PC-3 (cell line): ENCODE measurements at regions of chr13 and their contacts with region 1.

Region 1: GRCh38 chr13:23466144-23467002 is 32.9 kb upstream of the SACS start:
- DNase-seq: peak; percentile 77
- ATAC-seq: peak; percentile 74
- H3K4me3 ChIP-seq: peak overlapping the region; percentile 64
- H3K27ac ChIP-seq: peak overlapping the region; percentile 53
- H3K4me1 ChIP-seq: peaks cover 25% of the 10 kb centered on the region
- H3K27me3 ChIP-seq: no peaks in the 10 kb centered on the region
- CTCF ChIP-seq: peak; percentile 56

Region 2: DNA sequence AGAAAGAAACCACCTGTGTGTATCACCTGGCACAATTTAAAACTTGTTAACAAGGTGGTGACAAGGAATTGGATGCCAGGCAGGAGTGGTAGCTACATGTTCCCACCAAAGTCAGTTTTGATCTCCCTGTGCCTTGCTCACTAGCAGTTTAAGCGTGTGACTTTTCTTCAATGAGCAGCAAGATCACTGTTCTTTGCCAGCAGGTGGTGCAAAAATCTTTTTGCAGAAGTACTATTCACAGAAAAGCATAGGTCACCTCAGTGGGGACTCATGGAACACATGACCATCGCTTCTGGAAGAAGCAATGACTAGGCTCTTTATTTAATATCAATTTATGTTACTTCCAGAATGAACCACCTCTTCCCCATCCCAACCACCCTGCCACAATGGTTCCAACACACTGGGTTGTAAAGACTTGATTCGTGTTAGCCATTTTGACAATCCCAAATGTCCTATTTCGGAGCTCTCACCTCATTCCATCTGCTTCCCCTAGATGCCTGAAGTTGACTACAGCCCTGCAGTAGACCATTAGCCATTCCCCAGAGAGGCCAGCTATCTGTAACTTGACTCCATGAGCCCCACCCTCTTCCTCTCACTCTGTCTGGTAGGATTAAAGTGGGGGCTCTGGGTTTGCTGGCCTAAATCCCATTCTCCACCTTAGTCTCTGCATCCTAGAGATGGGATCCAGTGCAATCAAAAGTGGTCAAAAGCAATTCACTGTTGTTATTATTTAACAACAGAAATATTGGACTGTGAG is 44.8 kb after region 1 on chr13:
- CTCF ChIA-PET with region 1: no interaction called
- POLR2A ChIA-PET with region 1: no interaction called
- intact Hi-C with region 1: loop called (anchors 2 kb)
- DNase-seq: peak; percentile 50
- ATAC-seq: peak; percentile 37
- H3K4me3 ChIP-seq: no peak overlapping the region
- H3K27ac ChIP-seq: peak overlapping the region; percentile 83
- H3K4me1 ChIP-seq: peaks cover 32% of the 10 kb centered on the region
- H3K27me3 ChIP-seq: no peaks in the 10 kb centered on the region
- CTCF ChIP-seq: peak; percentile 56

Region 3: DNA sequence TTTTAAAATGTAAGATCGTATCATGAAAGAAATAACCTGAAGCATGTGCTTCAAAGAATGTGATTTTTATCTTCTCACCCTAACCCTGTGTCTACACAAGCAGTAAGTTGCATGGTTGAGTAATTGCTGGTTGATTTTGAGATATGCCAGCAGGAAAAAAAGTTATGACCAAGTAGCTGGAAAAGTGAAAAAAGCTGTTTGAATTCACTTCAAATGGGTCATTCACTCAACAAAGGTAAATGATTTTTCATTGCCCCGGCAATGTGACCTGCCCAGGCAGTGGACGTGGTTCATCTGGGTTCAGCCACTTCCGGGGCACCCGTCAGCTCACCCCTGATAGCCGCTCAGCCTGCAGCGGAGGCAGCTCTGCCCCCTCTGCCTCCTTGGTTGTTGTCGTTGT is 122.3 kb after region 1 on chr13:
- CTCF ChIA-PET with region 1: no interaction called
- POLR2A ChIA-PET with region 1: no interaction called
- intact Hi-C with region 1: no loop called
- DNase-seq: no peak
- ATAC-seq: no peak
- H3K4me3 ChIP-seq: no peak overlapping the region
- H3K27ac ChIP-seq: no peak overlapping the region
- H3K4me1 ChIP-seq: no peaks in the 10 kb centered on the region
- H3K27me3 ChIP-seq: no peaks in the 10 kb centered on the region
- CTCF ChIP-seq: no peak

Region 4: GRCh38 chr13:23673354-23673753 is 207.0 kb after region 1 on chr13:
- CTCF ChIA-PET with region 1: no interaction called
- POLR2A ChIA-PET with region 1: no interaction called
- intact Hi-C with region 1: loop called (anchors 10 kb)
- DNase-seq: peak; percentile 82
- ATAC-seq: peak; percentile 60
- H3K4me3 ChIP-seq: no peak overlapping the region
- H3K27ac ChIP-seq: peak overlapping the region; percentile 85
- H3K4me1 ChIP-seq: peaks cover 49% of the 10 kb centered on the region
- H3K27me3 ChIP-seq: no peaks in the 10 kb centered on the region
- CTCF ChIP-seq: no peak

Region 5: GRCh38 chr13:23715762-23716235 is 249.4 kb after region 1 on chr13:
- CTCF ChIA-PET with region 1: interaction called, 4 read pairs
- POLR2A ChIA-PET with region 1: no interaction called
- intact Hi-C with region 1: loop called (anchors 2 kb)
- DNase-seq: peak; percentile 78
- ATAC-seq: peak; percentile 80
- H3K4me3 ChIP-seq: peak overlapping the region; percentile 60
- H3K27ac ChIP-seq: peak overlapping the region; percentile 30; the same call in 1 of the 2 replicates
- H3K4me1 ChIP-seq: peaks cover 23% of the 10 kb centered on the region
- H3K27me3 ChIP-seq: no peaks in the 10 kb centered on the region
- CTCF ChIP-seq: peak; percentile 77

Region 6: DNA sequence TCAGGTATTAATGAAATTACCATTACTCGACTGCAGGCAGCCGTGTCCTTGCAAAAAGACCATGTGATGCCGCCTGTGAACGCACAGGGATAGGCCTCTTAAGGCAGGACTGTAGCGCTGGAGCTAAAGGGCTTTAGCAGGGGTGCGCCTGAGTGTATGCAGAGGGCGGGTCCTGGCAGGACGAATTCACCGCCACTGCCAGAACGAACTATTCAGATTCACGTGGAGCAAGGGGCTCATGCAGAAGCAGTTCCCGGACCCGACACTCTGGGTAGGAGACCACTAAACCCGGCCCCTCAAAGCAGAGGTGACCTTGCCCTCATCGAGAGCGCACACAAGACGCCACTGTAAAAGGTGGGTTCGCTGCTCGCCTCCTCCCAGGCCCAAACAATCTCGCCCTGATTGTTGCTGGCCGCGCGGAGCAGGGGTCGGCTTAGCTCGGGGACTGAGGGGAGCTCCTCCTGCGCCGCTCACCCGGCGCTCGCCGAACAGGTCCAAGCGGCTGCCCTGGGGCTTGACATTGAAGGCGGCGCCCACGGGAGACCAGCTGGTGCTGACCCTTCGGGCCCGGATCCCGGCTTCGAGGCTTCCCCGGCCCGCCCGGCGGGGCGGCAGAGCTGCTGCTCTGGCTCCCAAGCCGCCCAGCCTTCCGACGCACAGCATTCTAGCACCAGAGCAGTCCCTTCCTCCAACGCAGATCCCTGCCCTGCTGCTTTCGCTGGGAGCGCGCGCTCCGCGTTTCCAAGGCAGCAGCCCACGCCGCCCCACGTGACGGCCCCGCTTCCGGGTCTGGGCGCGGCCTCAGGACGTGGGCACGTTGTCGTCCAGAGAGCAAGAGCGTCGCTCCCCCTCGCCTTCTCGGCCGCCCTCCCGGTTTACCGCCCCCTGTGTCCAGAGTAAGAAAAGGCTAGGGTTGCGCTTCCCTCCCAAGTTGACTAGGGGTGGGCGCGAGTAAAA is 422.6 kb after region 1 on chr13 and contains the start of gene MIPEP:
- CTCF ChIA-PET with region 1: no interaction called
- POLR2A ChIA-PET with region 1: no interaction called
- intact Hi-C with region 1: loop called (anchors 5 kb)
- DNase-seq: peak; percentile 94
- ATAC-seq: peak; percentile 89
- H3K4me3 ChIP-seq: peak within 1 kb of the TSS; percentile 90
- H3K27ac ChIP-seq: peak within 1 kb of the TSS; percentile 69
- H3K4me1 ChIP-seq: no peaks in the 10 kb centered on the region; the same call in 1 of the 2 replicates
- H3K27me3 ChIP-seq: no peaks in the 10 kb centered on the region
- CTCF ChIP-seq: peak; percentile 77
- total RNA-seq, gene MIPEP: 30.5 and 31.0 TPM in 2 replicates